ENCODE measurements at regions of chr2 and their contacts with region 1.

Region 1: GRCh38 chr2:71609958-71610357 is 156.6 kb downstream of the DYSF start:
- DNase-seq: peak in 1 of 2 donors; percentile 4
- H3K4me3 ChIP-seq: no peak overlapping the region
- CTCF ChIP-seq: no peak
- POLR2A ChIP-seq: no peak

Region 2: DNA sequence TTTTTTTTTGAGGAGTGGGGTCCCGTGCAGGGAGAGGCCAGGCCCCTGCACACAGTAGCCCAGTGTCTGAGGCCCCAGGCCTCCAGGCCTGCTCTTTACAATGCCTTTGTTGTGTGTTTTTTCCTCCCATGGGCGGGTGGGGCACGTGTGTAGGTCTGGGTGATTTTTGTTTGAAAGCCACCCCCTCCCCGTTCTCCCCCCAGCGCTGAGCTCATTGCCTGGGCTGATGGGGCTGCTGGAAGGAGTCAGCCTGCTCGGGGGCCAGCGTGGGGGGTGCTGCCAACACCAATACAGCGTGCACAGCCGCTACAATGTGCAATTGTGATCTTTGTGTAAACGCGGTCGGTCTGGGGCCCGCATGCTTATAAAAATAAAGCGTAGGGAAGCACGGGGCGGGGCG is 13.9 kb before region 1 on chr2:
- intact Hi-C with region 1: no loop called
- DNase-seq: no peak
- H3K4me3 ChIP-seq: no peak overlapping the region
- CTCF ChIP-seq: no peak
- POLR2A ChIP-seq: no peak

Region 3: GRCh38 chr2:71789556-71790204 is 179.7 kb after region 1 on chr2:
- intact Hi-C with region 1: loop called (anchors 5 kb)
- DNase-seq: peak in 1 of 2 donors; percentile 53
- H3K4me3 ChIP-seq: no peak overlapping the region
- CTCF ChIP-seq: no peak
- POLR2A ChIP-seq: no peak

Measured in lower leg skin (tissue), 4 donors.